CD8-positive, alpha-beta T cell (primary cell): ENCODE measurements at regions of chr1 and their contacts with region 1.

Region 1: GRCh38 chr1:110356405-110356804 is 17.2 kb downstream of the RBM15 start:
- DNase-seq: no peak
- ATAC-seq: no peak
- H3K4me3 ChIP-seq: no peak overlapping the region
- H3K4me3 Mint-ChIP-seq: no peak overlapping the region
- H3K27ac ChIP-seq: no peak overlapping the region
- H3K27ac Mint-ChIP-seq: no peak overlapping the region
- H3K4me1 ChIP-seq: no peaks in the 10 kb centered on the region
- H3K4me1 Mint-ChIP-seq: peaks cover 32% of the 10 kb centered on the region
- H3K27me3 ChIP-seq: no peaks in the 10 kb centered on the region
- H3K27me3 Mint-ChIP-seq: no peaks in the 10 kb centered on the region
- CTCF ChIP-seq: no peak

Region 2: GRCh38 chr1:109579491-109579890 is 776.9 kb before region 1 on chr1:
- CTCF ChIA-PET with region 1: no interaction called
- POLR2A ChIA-PET with region 1: no interaction called
- intact Hi-C with region 1: no loop called
- DNase-seq: no peak
- ATAC-seq: no peak
- H3K4me3 ChIP-seq: no peak overlapping the region
- H3K4me3 Mint-ChIP-seq: no peak overlapping the region
- H3K27ac ChIP-seq: no peak overlapping the region
- H3K27ac Mint-ChIP-seq: no peak overlapping the region
- H3K4me1 ChIP-seq: no peaks in the 10 kb centered on the region
- H3K4me1 Mint-ChIP-seq: peaks cover 2% of the 10 kb centered on the region
- H3K27me3 ChIP-seq: no peaks in the 10 kb centered on the region
- H3K27me3 Mint-ChIP-seq: no peaks in the 10 kb centered on the region
- CTCF ChIP-seq: no peak

Region 3: DNA sequence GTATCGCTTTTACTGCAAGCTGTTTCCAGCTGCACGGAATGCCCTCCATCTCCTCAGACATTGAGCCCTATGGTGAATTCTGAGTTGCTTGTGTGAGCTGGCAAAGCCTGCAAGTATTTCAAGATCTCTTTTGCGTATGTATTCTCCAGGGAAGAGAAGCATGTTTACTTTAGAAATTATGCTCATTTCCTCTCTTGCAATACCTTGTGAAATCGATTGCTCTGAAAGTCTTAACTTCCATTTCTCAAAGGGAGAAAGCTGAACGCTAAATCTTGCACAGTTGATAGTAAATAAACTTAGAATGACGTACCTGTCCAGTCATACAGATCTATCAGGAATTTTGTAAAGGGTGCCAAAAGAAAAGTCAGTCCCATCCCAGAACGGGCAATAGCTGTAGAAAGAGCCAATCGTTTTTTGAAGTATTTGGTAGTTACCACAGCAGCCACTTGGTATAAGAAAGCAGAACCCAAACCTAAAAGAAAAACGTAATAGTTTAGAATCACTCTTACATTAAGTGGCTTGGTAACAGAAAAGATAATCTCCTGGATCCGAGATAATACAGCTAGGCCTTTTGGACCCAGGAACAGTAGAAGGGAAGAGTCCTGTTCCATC is 24.4 kb after region 1 on chr1:
- CTCF ChIA-PET with region 1: no interaction called
- POLR2A ChIA-PET with region 1: no interaction called
- intact Hi-C with region 1: loop called in 1 of 2 experiments (anchors 1 kb)
- DNase-seq: no peak
- ATAC-seq: no peak
- H3K4me3 ChIP-seq: no peak overlapping the region
- H3K4me3 Mint-ChIP-seq: no peak overlapping the region
- H3K27ac ChIP-seq: no peak overlapping the region
- H3K27ac Mint-ChIP-seq: peak overlapping the region; percentile 24
- H3K4me1 ChIP-seq: peaks cover 6% of the 10 kb centered on the region
- H3K4me1 Mint-ChIP-seq: peaks cover 19% of the 10 kb centered on the region
- H3K27me3 ChIP-seq: no peaks in the 10 kb centered on the region
- H3K27me3 Mint-ChIP-seq: no peaks in the 10 kb centered on the region
- CTCF ChIP-seq: no peak